GM13977 (cell line): ENCODE measurements at regions of chr7 and their contacts with region 1.

Region 1: GRCh38 chr7:39894904-39895303 is 55.2 kb upstream of the CDK13 start:
- DNase-seq: no peak
- CTCF ChIP-seq: no peak

Region 2: DNA sequence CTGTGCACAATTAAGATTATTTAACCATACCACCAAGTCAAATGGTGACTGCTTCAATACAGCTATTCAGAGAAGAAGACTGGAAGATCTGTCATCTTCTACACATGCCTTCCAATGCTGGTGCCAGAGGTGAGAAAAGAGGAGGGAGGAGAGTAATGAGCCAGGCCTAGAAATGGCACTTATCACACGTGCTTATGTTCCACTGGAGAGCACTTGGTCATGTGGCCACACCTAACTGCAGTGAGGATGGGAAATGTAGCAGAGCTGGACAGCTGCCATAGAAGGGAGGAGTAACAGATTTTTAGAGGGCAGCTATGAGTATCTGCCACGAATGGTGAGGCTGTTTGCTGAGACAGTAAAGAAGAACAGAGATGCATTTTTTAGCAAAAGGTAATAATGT is 162.4 kb after region 1 on chr7:
- in situ Hi-C with region 1: loop called (anchors 10 kb)
- DNase-seq: no peak
- CTCF ChIP-seq: no peak